ENCODE measurements at regions of chr6 and their contacts with region 1.

Region 1: DNA sequence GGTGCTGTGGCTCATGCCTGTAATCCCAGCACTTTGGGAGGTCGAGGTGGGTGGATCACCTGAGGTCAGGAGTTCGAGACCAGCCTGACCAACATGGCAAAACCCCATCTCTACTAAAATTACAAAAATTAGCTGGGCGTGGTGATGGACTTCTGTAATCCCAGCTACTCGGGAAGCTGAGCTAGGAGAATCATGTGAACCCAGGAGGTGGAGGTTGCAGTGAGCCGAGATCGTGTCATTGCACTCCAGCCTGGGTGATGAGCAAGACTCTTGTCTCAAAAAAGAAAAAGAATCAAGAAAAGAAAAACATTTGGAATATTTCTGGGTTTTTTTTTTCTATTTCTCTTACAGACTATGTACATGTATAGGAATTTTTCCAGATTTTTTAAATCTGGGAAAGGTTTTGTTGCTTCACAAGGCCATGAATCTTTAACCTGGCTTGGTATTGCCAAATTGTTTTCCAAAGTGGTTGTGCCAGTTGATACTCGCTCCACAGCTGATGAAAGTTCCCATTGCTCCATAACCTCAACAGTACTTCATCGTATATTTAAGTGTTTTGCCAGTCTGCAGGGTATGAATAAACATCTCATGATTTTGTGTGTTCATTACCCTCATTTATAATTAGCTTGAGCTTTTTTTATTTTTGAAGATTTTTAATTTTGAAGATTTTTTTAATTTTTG is 33.5 kb downstream of the RNF217 start:
- DNase-seq: no peak
- ATAC-seq: no peak
- H3K4me3 ChIP-seq: no peak overlapping the region
- H3K4me3 Mint-ChIP-seq: no peak overlapping the region
- H3K27ac ChIP-seq: no peak overlapping the region
- H3K27ac Mint-ChIP-seq: no peak overlapping the region
- H3K4me1 ChIP-seq: no peaks in the 10 kb centered on the region
- H3K4me1 Mint-ChIP-seq: no peaks in the 10 kb centered on the region
- H3K27me3 ChIP-seq: no peaks in the 10 kb centered on the region
- H3K27me3 Mint-ChIP-seq: no peaks in the 10 kb centered on the region
- CTCF ChIP-seq: no peak

Region 2: DNA sequence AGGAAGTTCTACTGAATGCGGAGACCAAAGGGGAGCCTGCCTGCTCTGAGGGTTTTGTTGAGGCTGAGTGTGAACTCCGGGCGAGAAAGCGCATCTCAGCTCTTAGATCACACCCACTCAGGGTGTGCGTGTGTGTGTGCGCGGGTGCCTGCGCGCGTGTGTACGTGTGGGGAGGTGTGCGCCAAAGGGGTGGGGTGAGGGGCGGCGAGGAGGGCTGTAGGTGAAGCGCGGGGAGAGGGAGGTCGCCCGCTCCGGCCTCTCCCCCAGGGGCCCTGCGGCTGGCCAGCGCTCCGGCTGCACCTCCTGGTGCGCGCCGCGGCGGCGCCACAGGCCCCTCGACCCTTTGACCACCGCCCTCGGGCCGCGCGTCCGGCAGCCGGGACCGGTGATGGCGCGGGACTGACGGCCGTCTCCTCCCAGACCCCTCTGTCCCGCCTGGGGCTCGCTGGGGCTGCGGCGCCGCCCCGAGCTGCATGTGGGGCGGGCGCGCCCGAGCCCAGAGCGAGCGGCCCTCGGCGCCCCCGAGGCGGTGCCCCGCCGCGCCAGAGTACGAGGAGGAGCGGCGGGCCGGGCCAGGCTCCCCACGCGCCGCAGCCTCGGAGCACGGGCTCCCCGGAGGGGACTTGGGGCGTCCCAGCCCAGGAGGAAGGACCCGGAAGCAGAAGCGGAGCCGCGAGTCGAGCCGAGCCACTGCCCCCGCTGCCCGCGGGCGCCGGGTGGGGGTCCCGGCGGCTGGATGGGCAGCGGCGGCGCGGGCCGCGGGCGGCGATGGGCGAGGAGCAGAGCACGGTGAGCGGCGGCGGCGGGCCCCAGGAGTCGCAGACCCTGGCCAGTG is 33.8 kb before region 1 on chr6 and contains the start of gene RNF217:
- CTCF ChIA-PET with region 1: no interaction called
- POLR2A ChIA-PET with region 1: no interaction called
- intact Hi-C with region 1: loop called (anchors 1 kb)
- DNase-seq: no peak
- ATAC-seq: no peak
- H3K4me3 ChIP-seq: peak within 1 kb of the TSS in 1 of 5 experiments; percentile 38
- H3K4me3 Mint-ChIP-seq: peak within 1 kb of the TSS; percentile 45
- H3K27ac ChIP-seq: no peak within 1 kb of the TSS
- H3K27ac Mint-ChIP-seq: no peak within 1 kb of the TSS
- H3K4me1 ChIP-seq: peaks cover 0 to 2% of the 10 kb centered on the region in 2 donors
- H3K4me1 Mint-ChIP-seq: peaks cover 14% of the 10 kb centered on the region
- H3K27me3 ChIP-seq: peaks cover 0 to 11% (median 10%) of the 10 kb centered on the region in 4 experiments
- H3K27me3 Mint-ChIP-seq: peaks cover 37% of the 10 kb centered on the region
- CTCF ChIP-seq: no peak
- total RNA-seq, gene RNF217: not detected in 2 replicates

Measured in B cell (primary cell).